CD8-positive, alpha-beta T cell (primary cell): ENCODE measurements at regions of chr4 and their contacts with region 1.

Region 1: GRCh38 chr4:78704981-78705683 is 71.0 kb upstream of the BMP2K start:
- DNase-seq: no peak
- ATAC-seq: no peak
- H3K4me3 ChIP-seq: no peak overlapping the region
- H3K4me3 Mint-ChIP-seq: no peak overlapping the region
- H3K27ac ChIP-seq: no peak overlapping the region
- H3K27ac Mint-ChIP-seq: no peak overlapping the region
- H3K4me1 ChIP-seq: no peaks in the 10 kb centered on the region
- H3K4me1 Mint-ChIP-seq: no peaks in the 10 kb centered on the region
- H3K27me3 ChIP-seq: no peaks in the 10 kb centered on the region
- H3K27me3 Mint-ChIP-seq: no peaks in the 10 kb centered on the region
- CTCF ChIP-seq: no peak

Region 2: GRCh38 chr4:78179123-78179522 is 526.0 kb before region 1 on chr4:
- CTCF ChIA-PET with region 1: no interaction called
- POLR2A ChIA-PET with region 1: no interaction called
- intact Hi-C with region 1: no loop called
- DNase-seq: no peak
- ATAC-seq: no peak
- H3K4me3 ChIP-seq: no peak overlapping the region
- H3K4me3 Mint-ChIP-seq: no peak overlapping the region
- H3K27ac ChIP-seq: no peak overlapping the region
- H3K27ac Mint-ChIP-seq: no peak overlapping the region
- H3K4me1 ChIP-seq: no peaks in the 10 kb centered on the region
- H3K4me1 Mint-ChIP-seq: no peaks in the 10 kb centered on the region
- H3K27me3 ChIP-seq: no peaks in the 10 kb centered on the region
- H3K27me3 Mint-ChIP-seq: peaks cover 4% of the 10 kb centered on the region
- CTCF ChIP-seq: no peak

Region 3: GRCh38 chr4:78749972-78750727 is 45.0 kb after region 1 on chr4:
- CTCF ChIA-PET with region 1: no interaction called
- POLR2A ChIA-PET with region 1: no interaction called
- intact Hi-C with region 1: no loop called
- DNase-seq: peak in 1 of 9 experiments; percentile 18
- ATAC-seq: no peak
- H3K4me3 ChIP-seq: no peak overlapping the region
- H3K4me3 Mint-ChIP-seq: no peak overlapping the region
- H3K27ac ChIP-seq: no peak overlapping the region
- H3K27ac Mint-ChIP-seq: no peak overlapping the region
- H3K4me1 ChIP-seq: no peaks in the 10 kb centered on the region
- H3K4me1 Mint-ChIP-seq: no peaks in the 10 kb centered on the region
- H3K27me3 ChIP-seq: no peaks in the 10 kb centered on the region
- H3K27me3 Mint-ChIP-seq: no peaks in the 10 kb centered on the region
- CTCF ChIP-seq: no peak

Region 4: GRCh38 chr4:79088946-79089691 is 384.0 kb after region 1 on chr4:
- CTCF ChIA-PET with region 1: no interaction called
- POLR2A ChIA-PET with region 1: no interaction called
- intact Hi-C with region 1: loop called in 1 of 2 experiments (anchors 5 kb)
- DNase-seq: no peak
- ATAC-seq: no peak
- H3K4me3 ChIP-seq: no peak overlapping the region
- H3K4me3 Mint-ChIP-seq: no peak overlapping the region
- H3K27ac ChIP-seq: no peak overlapping the region
- H3K27ac Mint-ChIP-seq: no peak overlapping the region
- H3K4me1 ChIP-seq: no peaks in the 10 kb centered on the region
- H3K4me1 Mint-ChIP-seq: no peaks in the 10 kb centered on the region
- H3K27me3 ChIP-seq: no peaks in the 10 kb centered on the region
- H3K27me3 Mint-ChIP-seq: no peaks in the 10 kb centered on the region
- CTCF ChIP-seq: no peak